ENCODE measurements at regions of chr14 and their contacts with region 1.

Region 1: DNA sequence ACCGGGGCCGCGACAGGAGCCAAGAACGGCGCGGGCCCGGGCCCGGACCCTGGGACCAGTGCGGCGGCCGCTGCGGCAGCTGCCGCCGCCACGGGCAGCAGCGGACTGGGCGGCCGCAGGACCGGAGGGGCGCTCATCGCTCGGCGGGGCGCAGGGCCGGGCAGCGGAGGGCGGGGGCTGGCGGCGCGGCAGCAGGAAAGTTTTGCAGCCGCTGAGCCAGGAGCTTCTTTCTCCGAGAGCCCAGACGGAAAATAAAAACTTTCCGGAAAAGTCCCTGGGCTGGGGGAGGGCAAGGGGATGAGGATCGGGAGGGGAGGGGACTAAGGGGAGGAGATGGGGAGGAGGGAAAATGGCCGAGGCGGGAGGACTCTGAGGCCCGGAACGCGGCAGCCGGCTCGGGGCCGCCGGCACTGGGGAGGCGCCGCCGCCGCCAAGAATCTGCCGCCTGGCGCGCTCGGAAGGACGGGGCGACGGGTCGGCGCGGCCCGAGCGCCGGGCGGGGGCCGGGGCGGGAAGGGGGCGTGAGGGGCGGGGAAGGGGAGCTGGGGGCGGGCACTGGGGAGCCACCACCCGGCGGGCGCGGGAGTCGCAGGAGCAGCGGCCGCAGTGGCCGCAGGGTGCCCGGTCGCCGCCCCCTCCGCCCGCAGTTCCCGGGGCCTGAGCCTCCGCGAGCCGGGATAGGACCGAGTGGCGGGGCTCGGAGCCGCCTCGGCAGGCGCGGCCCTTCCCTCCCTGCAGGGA is at the start of gene PRKD1:
- DNase-seq: peak; percentile 55
- H3K4me3 ChIP-seq: peak within 1 kb of the TSS; percentile 69 to 79
- H3K27ac ChIP-seq: peak within 1 kb of the TSS; percentile 80 to 81
- H3K4me1 ChIP-seq: no peaks in the 10 kb centered on the region
- H3K27me3 ChIP-seq: no peaks in the 10 kb centered on the region
- CTCF ChIP-seq: peak; percentile 18 to 30 (median 28)
- POLR2A ChIP-seq: peak; percentile 37
- total RNA-seq, gene PRKD1: 45.0 to 82.0 TPM

Region 2: GRCh38 chr14:29558516-29558915 is 369.0 kb before region 1 on chr14:
- intact Hi-C with region 1: loop called (anchors 10 kb)
- DNase-seq: no peak
- H3K4me3 ChIP-seq: no peak overlapping the region
- H3K27ac ChIP-seq: no peak overlapping the region
- H3K4me1 ChIP-seq: no peaks in the 10 kb centered on the region
- H3K27me3 ChIP-seq: no peaks in the 10 kb centered on the region
- CTCF ChIP-seq: no peak
- POLR2A ChIP-seq: no peak

Region 3: DNA sequence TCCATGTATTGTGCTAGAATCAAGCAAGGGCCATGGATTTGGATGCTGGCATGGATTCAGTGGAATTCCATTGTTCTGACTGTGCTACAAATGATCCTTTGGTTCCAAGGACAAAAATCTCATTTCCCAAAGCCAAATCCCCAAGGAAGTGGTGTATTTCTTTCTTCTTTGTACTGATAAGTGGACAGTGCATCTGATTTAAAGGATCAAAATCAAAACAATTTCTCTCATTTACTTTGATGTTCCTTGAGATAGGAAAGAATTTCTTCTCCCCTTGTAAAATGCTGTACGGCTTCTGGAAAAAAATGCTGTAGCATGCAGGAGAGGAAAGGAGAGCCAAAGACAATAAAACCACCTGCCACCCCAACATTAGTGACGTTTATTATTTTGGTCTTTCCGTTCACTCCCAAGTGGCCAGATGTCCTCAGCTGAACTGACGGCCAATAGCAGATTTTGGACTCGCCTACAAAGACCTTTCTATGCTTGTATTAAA is 185.6 kb before region 1 on chr14:
- intact Hi-C with region 1: loop called (anchors 5 kb)
- DNase-seq: no peak
- H3K4me3 ChIP-seq: no peak overlapping the region
- H3K27ac ChIP-seq: peak overlapping the region; percentile 1 to 26
- H3K4me1 ChIP-seq: peaks cover 8% of the 10 kb centered on the region
- H3K27me3 ChIP-seq: no peaks in the 10 kb centered on the region
- CTCF ChIP-seq: no peak
- POLR2A ChIP-seq: no peak